ENCODE measurements at regions of chr16 and their contacts with region 1.

Region 1: GRCh38 chr16:8878521-8878911 is 3.6 kb upstream of the LITAFD start:
- DNase-seq: no peak
- H3K4me3 ChIP-seq: no peak overlapping the region
- H3K27ac ChIP-seq: no peak overlapping the region
- H3K4me1 ChIP-seq: no peaks in the 10 kb centered on the region
- H3K27me3 ChIP-seq: no peaks in the 10 kb centered on the region
- CTCF ChIP-seq: no peak
- POLR2A ChIP-seq: no peak

Region 2: GRCh38 chr16:8567750-8568617 is 310.5 kb before region 1 on chr16:
- intact Hi-C with region 1: loop called in 1 of 2 experiments (anchors 5 kb)
- DNase-seq: peak; percentile 65 to 90 (median 82)
- H3K4me3 ChIP-seq: no peak overlapping the region
- H3K27ac ChIP-seq: no peak overlapping the region
- H3K4me1 ChIP-seq: no peaks in the 10 kb centered on the region
- H3K27me3 ChIP-seq: no peaks in the 10 kb centered on the region
- CTCF ChIP-seq: peak; percentile 99
- POLR2A ChIP-seq: no peak

Region 3: GRCh38 chr16:8660841-8661301 is 217.6 kb before region 1 on chr16:
- intact Hi-C with region 1: loop called (anchors 5 to 10 kb)
- DNase-seq: peak; percentile 61 to 88 (median 76)
- H3K4me3 ChIP-seq: no peak overlapping the region
- H3K27ac ChIP-seq: no peak overlapping the region
- H3K4me1 ChIP-seq: no peaks in the 10 kb centered on the region
- H3K27me3 ChIP-seq: no peaks in the 10 kb centered on the region
- CTCF ChIP-seq: peak; percentile 30 to 89 (median 80)
- POLR2A ChIP-seq: no peak

Region 4: GRCh38 chr16:8797364-8798173 is 80.9 kb before region 1 on chr16 and contains the starts of genes PMM2 and TMEM186:
- intact Hi-C with region 1: loop called (anchors 5 kb)
- DNase-seq: peak; percentile 94 to 98 (median 97)
- H3K4me3 ChIP-seq: peak within 1 kb of the TSS; percentile 81 to 99 (median 94)
- H3K27ac ChIP-seq: peak within 1 kb of the TSS; percentile 41 to 92 (median 63)
- H3K4me1 ChIP-seq: peaks cover 24 to 31% of the 10 kb centered on the region in 2 donors
- H3K27me3 ChIP-seq: no peaks in the 10 kb centered on the region
- CTCF ChIP-seq: peak in 1 of 6 experiments; percentile 27
- POLR2A ChIP-seq: no peak
- total RNA-seq, gene PMM2: 7.4 to 69.9 (median 23.1) TPM
- total RNA-seq, gene TMEM186: 7.9 to 14.6 (median 13.2) TPM

Region 5: GRCh38 chr16:8819411-8820034 is 59.0 kb before region 1 on chr16:
- intact Hi-C with region 1: loop called in 1 of 2 experiments (anchors 5 kb)
- DNase-seq: no peak
- H3K4me3 ChIP-seq: no peak overlapping the region
- H3K27ac ChIP-seq: peak overlapping the region in 1 of 5 donors; percentile 25
- H3K4me1 ChIP-seq: peaks cover 0 to 3% of the 10 kb centered on the region in 2 donors
- H3K27me3 ChIP-seq: no peaks in the 10 kb centered on the region
- CTCF ChIP-seq: no peak
- POLR2A ChIP-seq: no peak

Region 6: GRCh38 chr16:8931859-8932258 is 53.3 kb after region 1 on chr16:
- intact Hi-C with region 1: no loop called
- DNase-seq: peak in 6 of 7 donors; percentile 54 to 69 (median 67)
- H3K4me3 ChIP-seq: no peak overlapping the region
- H3K27ac ChIP-seq: no peak overlapping the region
- H3K4me1 ChIP-seq: peaks cover 0 to 11% of the 10 kb centered on the region in 2 donors
- H3K27me3 ChIP-seq: no peaks in the 10 kb centered on the region
- CTCF ChIP-seq: no peak
- POLR2A ChIP-seq: no peak

Region 7: DNA sequence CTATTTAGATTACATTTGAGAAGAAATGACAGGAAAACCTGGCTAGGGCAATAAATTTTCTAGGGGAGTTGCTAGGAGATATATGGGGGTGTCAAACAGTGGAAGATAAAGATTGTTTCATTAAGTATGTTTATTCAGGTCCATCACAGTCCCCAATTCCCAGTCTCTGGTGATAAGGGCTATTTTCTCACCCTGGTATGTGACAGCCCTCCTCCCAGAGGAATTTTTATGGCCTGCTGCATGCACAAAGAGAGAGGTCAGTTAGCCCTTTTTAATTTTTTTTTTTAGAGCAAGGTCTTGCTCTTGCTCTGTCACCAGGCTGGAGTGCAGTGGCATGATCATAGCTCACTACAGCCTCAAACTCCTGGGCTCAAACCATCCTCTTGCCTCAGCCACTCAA is 1453.7 kb after region 1 on chr16:
- intact Hi-C with region 1: no loop called
- DNase-seq: peak in 4 of 7 donors; percentile 27 to 64 (median 47)
- H3K4me3 ChIP-seq: no peak overlapping the region
- H3K27ac ChIP-seq: peak overlapping the region in 3 of 5 donors; percentile 32 to 69 (median 47)
- H3K4me1 ChIP-seq: peaks cover 9 to 15% of the 10 kb centered on the region in 2 donors
- H3K27me3 ChIP-seq: no peaks in the 10 kb centered on the region
- CTCF ChIP-seq: no peak
- POLR2A ChIP-seq: no peak